ENCODE measurements at regions of chr12 and their contacts with region 1.

Region 1: GRCh38 chr12:42482445-42483237 is 106.9 kb downstream of the PRICKLE1 start:
- DNase-seq: peak; percentile 50
- ATAC-seq: peak; percentile 86
- H3K4me3 Mint-ChIP-seq: peak overlapping the region; percentile 63
- H3K27ac Mint-ChIP-seq: no peak overlapping the region
- H3K4me1 Mint-ChIP-seq: peaks cover 14% of the 10 kb centered on the region
- H3K27me3 Mint-ChIP-seq: peaks cover 86% of the 10 kb centered on the region

Region 2: GRCh38 chr12:42447371-42447786 is 35.3 kb before region 1 on chr12:
- CTCF ChIA-PET with region 1: no interaction called
- DNase-seq: no peak
- ATAC-seq: no peak
- H3K4me3 Mint-ChIP-seq: no peak overlapping the region
- H3K27ac Mint-ChIP-seq: no peak overlapping the region
- H3K4me1 Mint-ChIP-seq: no peaks in the 10 kb centered on the region
- H3K27me3 Mint-ChIP-seq: no peaks in the 10 kb centered on the region

Region 3: GRCh38 chr12:42469355-42470175 is 13.1 kb before region 1 on chr12:
- CTCF ChIA-PET with region 1: interaction called, 27 read pairs
- DNase-seq: peak; percentile 43
- ATAC-seq: peak; percentile 77
- H3K4me3 Mint-ChIP-seq: peak overlapping the region; percentile 67
- H3K27ac Mint-ChIP-seq: peak overlapping the region; percentile 49
- H3K4me1 Mint-ChIP-seq: peaks cover 20% of the 10 kb centered on the region
- H3K27me3 Mint-ChIP-seq: peaks cover 30% of the 10 kb centered on the region

Region 4: GRCh38 chr12:42568952-42569915 is 86.6 kb after region 1 on chr12:
- CTCF ChIA-PET with region 1: interaction called, 16 read pairs
- DNase-seq: no peak
- ATAC-seq: no peak
- H3K4me3 Mint-ChIP-seq: no peak overlapping the region
- H3K27ac Mint-ChIP-seq: no peak overlapping the region
- H3K4me1 Mint-ChIP-seq: no peaks in the 10 kb centered on the region
- H3K27me3 Mint-ChIP-seq: peaks cover 6% of the 10 kb centered on the region

Region 5: DNA sequence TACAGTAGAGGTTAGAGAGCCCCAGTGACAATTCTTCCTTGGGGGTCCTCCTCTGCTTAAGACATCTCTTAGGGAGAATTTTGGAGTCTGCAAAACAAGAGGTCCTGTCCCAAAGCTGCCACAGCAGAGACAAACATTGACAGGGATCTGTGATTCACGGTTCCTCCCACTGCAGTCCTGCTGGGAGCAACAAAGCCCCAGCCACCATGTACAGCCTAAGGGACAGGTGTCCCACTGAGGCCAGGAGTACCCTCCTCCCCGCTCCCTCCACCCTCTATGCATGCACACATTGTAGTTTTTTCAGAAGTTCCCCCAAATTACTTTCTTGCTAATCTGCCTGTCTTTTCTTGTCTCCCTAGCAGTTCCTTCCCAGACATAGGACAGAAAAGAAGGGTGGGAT is 120.6 kb after region 1 on chr12:
- CTCF ChIA-PET with region 1: no interaction called
- DNase-seq: no peak
- ATAC-seq: no peak
- H3K4me3 Mint-ChIP-seq: no peak overlapping the region
- H3K27ac Mint-ChIP-seq: no peak overlapping the region
- H3K4me1 Mint-ChIP-seq: no peaks in the 10 kb centered on the region
- H3K27me3 Mint-ChIP-seq: peaks cover 15% of the 10 kb centered on the region

Measured in activated CD8-positive, alpha-beta memory T cell treated with anti-CD3 and anti-CD28 coated beads, Interleukin-2, amount 10 ng/mL, durations not matched to agents 7 days and 5 days (primary cell).